Ascending aorta (tissue), 2 donors: ENCODE measurements at regions of chr17 and their contacts with region 1.

Region 1: DNA sequence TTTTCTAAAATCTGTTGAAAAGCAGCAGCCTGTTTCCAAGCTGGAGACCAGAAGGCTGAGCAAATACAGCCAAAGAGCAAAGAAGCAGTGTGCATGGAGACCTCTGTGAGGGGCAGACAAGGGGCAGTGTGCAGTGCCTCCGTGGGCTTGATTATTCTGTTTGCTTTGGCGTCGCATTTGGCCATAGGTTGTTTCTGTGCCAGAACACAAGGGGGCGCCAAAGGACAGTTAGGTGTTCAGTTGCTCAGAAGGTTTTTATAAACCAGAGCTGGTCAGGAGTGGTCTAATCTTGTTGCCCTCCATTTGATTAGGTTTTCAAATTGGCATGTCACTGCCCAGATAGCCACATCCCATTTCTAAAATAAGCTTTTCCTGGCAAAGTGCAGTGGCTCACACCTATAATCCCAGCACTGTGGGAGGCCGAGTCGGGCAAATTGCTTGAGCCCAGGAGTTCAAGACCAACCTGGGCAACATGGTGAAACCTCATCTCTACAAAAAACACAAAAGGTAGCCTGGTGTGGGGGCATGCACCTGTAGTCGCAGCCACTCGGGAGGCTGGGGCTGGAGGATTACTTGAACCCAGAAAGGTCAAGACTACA is 10.6 kb downstream of the MYH3 start:
- DNase-seq: peak in 1 of 2 donors; percentile 80
- H3K4me3 ChIP-seq: no peak overlapping the region
- H3K27ac ChIP-seq: no peak overlapping the region
- H3K4me1 ChIP-seq: no peaks in the 10 kb centered on the region
- H3K27me3 ChIP-seq: no peaks in the 10 kb centered on the region
- CTCF ChIP-seq: peak; percentile 66 to 86 (median 84)

Region 2: DNA sequence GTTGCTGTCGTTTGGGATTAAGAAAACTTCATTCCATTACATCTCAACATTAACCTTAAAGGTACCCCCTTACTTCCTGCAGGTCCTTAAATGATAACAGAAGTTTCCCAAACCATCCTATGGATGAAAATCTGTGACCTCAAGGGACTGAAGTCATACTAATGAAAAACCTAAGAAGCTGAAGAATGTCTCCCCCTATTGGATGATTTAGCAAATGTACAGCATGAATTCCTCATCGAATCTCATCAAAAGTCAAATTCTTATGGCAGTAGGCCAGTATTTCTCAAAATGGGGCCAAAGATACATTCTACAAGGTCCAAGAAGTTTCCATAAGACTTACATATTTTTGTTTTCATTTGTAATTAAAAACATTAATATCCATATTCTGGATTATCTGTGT is 37.4 kb after region 1 on chr17:
- intact Hi-C with region 1: loop called (anchors 2 kb)
- DNase-seq: no peak
- H3K4me3 ChIP-seq: no peak overlapping the region
- H3K27ac ChIP-seq: peak overlapping the region in 1 of 2 donors; percentile 19
- H3K4me1 ChIP-seq: peaks cover 8 to 10% of the 10 kb centered on the region in 2 donors
- H3K27me3 ChIP-seq: no peaks in the 10 kb centered on the region
- CTCF ChIP-seq: peak in 2 of 3 experiments; percentile 31 to 37

Region 3: GRCh38 chr17:10697092-10698081 is 50.9 kb after region 1 on chr17 and contains the starts of genes ADPRM and SCO1:
- intact Hi-C with region 1: loop called (anchors 5 kb)
- DNase-seq: peak; percentile 79 to 97
- H3K4me3 ChIP-seq: peak within 1 kb of the TSS; percentile 99 to 100
- H3K27ac ChIP-seq: peak within 1 kb of the TSS; percentile 94 to 97
- H3K4me1 ChIP-seq: peaks cover 5 to 18% of the 10 kb centered on the region in 2 donors
- H3K27me3 ChIP-seq: no peaks in the 10 kb centered on the region
- CTCF ChIP-seq: peak in 2 of 3 experiments; percentile 35 to 46
- total RNA-seq, gene ADPRM: not detected
- total RNA-seq, gene SCO1: 173 TPM

Region 4: DNA sequence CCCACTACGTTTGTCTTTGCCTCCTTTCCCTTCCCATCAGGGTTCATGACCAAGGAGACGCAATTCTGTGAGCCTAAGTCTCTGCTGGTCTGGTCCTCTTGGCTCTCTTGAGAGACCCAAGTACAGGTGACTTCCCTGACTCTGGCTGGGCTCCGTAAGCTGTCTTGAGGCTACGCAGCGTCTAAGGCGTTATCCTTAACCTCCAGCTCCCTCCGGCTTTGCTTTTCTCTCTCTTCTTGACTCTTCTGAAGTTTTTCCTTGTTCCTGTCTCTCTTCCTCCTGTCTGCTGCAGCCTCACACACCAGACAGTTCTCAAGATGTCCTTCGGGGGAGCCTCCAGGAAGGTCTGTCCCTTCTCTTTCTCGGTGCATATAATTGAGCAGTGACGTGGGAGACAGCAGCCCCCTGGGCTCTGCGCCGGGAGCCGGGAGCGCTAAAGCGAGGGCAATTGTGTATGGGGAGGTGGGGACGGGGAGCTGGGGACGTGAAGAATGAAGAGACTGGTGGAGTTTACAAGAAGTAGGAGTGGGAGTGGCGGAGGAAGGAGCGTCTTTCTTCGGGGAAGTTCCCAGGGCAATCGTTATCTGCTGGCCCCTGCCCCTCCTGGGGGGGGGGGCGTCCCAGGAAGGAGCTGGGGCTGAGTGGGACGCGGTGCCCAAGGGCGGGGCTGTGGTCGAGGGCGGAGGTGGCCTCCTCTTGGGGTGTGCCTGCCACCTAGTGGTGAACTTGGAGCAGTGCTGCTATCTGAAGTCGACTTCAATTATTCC is 198.3 kb after region 1 on chr17:
- intact Hi-C with region 1: loop called (anchors 1 kb)
- DNase-seq: peak in 1 of 2 donors; percentile 84
- H3K4me3 ChIP-seq: peak overlapping the region; percentile 57 to 72
- H3K27ac ChIP-seq: no peak overlapping the region
- H3K4me1 ChIP-seq: peaks cover 0 to 4% of the 10 kb centered on the region in 2 donors
- H3K27me3 ChIP-seq: no peaks in the 10 kb centered on the region
- CTCF ChIP-seq: peak; percentile 74 to 95 (median 94)